PC-3 (cell line): ENCODE measurements at regions of chr2 and their contacts with region 1.

Region 1: GRCh38 chr2:210399440-210400041 is 77.0 kb downstream of the LANCL1 start:
- DNase-seq: peak; percentile 61
- ATAC-seq: no peak; the same call in 1 of the 2 replicates
- H3K4me3 ChIP-seq: no peak overlapping the region
- H3K27ac ChIP-seq: no peak overlapping the region
- H3K4me1 ChIP-seq: no peaks in the 10 kb centered on the region
- H3K27me3 ChIP-seq: peaks cover 12% of the 10 kb centered on the region; the same call in 1 of the 2 replicates
- CTCF ChIP-seq: peak; percentile 72

Region 2: DNA sequence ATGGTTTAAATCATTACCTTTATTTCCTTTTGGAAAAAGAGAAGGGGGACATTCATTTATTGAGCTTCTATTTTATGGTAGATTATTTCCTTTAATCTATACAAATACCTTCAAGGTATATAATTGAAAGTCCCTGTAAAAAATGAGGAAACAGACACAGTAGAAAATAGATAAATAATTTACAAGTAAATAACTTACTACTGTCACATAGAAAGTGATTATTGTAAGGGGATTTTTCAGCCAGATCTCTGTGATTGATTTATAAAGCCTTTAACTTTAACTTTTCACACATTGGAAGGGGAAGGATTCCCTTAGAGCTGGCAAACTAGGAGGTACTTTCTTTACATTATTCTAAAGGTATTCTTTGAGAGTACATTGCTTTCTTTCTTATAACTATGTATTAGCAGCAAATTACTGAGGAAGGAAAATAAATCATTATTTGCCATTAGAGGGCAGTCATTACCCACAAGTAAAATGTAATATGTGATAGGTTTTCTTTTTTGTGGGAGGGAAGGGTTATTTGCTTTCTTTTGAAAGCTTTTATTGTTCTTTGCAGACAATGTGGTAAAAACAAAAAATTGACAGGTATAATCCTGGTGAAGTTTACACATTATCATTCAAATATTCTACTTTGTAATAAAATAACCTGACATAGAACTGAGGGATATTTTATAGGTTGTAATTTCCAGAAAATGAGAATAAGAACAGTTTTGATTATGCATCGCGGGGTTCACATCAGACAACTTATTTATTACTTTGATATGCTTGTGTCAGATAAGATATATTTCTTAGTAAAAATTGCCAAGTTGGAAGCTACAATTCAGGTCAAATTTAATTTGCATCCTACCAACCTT is 421.9 kb before region 1 on chr2:
- CTCF ChIA-PET with region 1: no interaction called
- POLR2A ChIA-PET with region 1: no interaction called
- intact Hi-C with region 1: loop called (anchors 2 kb)
- DNase-seq: peak; percentile 68
- ATAC-seq: peak; percentile 46; the same call in 1 of the 2 replicates
- H3K4me3 ChIP-seq: no peak overlapping the region
- H3K27ac ChIP-seq: no peak overlapping the region
- H3K4me1 ChIP-seq: no peaks in the 10 kb centered on the region
- H3K27me3 ChIP-seq: peaks cover 31% of the 10 kb centered on the region
- CTCF ChIP-seq: peak; percentile 68

Region 3: GRCh38 chr2:210252699-210253606 is 146.6 kb before region 1 on chr2:
- CTCF ChIA-PET with region 1: no interaction called
- POLR2A ChIA-PET with region 1: no interaction called
- intact Hi-C with region 1: loop called (anchors 1 kb)
- DNase-seq: no peak
- ATAC-seq: no peak
- H3K4me3 ChIP-seq: no peak overlapping the region
- H3K27ac ChIP-seq: no peak overlapping the region
- H3K4me1 ChIP-seq: no peaks in the 10 kb centered on the region
- H3K27me3 ChIP-seq: peaks cover 18% of the 10 kb centered on the region
- CTCF ChIP-seq: no peak

Region 4: DNA sequence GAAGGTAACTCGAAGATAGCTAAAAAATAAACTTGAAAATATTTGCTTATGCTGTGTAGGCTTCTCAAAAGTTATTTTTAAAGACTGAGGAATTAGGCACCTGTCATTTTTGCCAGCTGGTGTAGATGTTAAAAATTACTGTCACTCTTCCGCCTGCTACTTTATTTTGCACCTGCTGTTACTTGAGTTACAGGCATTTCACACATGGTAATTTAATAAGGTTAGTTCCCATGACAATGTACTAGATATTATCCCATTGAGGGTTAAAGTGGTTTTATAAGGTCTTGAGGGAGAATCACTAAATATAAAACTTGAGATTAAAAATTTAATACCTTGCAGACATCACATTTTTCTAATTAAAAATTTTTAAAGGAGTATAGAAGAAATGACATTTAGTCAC is 111.1 kb before region 1 on chr2:
- CTCF ChIA-PET with region 1: no interaction called
- POLR2A ChIA-PET with region 1: no interaction called
- intact Hi-C with region 1: no loop called
- DNase-seq: no peak
- ATAC-seq: no peak
- H3K4me3 ChIP-seq: no peak overlapping the region
- H3K27ac ChIP-seq: no peak overlapping the region
- H3K4me1 ChIP-seq: no peaks in the 10 kb centered on the region
- H3K27me3 ChIP-seq: peaks cover 9% of the 10 kb centered on the region; the same call in 1 of the 2 replicates
- CTCF ChIP-seq: no peak